ENCODE measurements at regions of chr7 and their contacts with region 1.

Region 1: GRCh38 chr7:7761340-7761980 is 43.1 kb upstream of the RPA3 start:
- DNase-seq: peak; percentile 64
- H3K4me3 Mint-ChIP-seq: peak overlapping the region; percentile 87
- H3K27ac Mint-ChIP-seq: peak overlapping the region; percentile 95
- H3K4me1 Mint-ChIP-seq: peaks cover 33% of the 10 kb centered on the region
- H3K27me3 Mint-ChIP-seq: no peaks in the 10 kb centered on the region
- CTCF ChIP-seq: peak; percentile 30

Region 2: GRCh38 chr7:7595451-7595850 is 166.0 kb before region 1 on chr7:
- CTCF ChIA-PET with region 1: interaction called, 7 read pairs
- POLR2A ChIA-PET with region 1: no interaction called
- intact Hi-C with region 1: loop called (anchors 1 kb)
- DNase-seq: peak; percentile 26
- H3K4me3 Mint-ChIP-seq: no peak overlapping the region
- H3K27ac Mint-ChIP-seq: no peak overlapping the region
- H3K4me1 Mint-ChIP-seq: peaks cover 5% of the 10 kb centered on the region
- H3K27me3 Mint-ChIP-seq: no peaks in the 10 kb centered on the region
- CTCF ChIP-seq: peak; percentile 28

Region 3: DNA sequence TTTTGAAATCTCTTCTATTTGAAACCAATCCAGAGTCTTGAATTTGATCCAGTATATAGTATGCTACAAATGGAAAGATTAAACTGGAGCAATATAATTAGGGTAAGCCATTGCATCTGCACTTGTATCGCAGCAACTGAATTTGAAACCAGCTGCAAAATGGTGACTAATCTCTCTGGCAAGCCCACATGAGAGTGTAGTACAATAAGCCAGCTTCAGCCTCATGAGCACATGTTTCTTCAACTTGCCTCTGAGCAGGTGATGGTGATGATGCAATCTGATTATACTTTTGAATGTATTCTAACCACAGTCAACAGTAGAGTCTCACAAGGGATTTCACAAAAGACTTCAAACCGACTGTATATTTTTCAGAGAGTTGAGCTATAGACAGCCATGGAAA is 42.2 kb before region 1 on chr7:
- CTCF ChIA-PET with region 1: no interaction called
- POLR2A ChIA-PET with region 1: interaction called, 19 read pairs
- intact Hi-C with region 1: no loop called
- DNase-seq: peak; percentile 96
- H3K4me3 Mint-ChIP-seq: peak overlapping the region; percentile 55
- H3K27ac Mint-ChIP-seq: peak overlapping the region; percentile 90
- H3K4me1 Mint-ChIP-seq: peaks cover 18% of the 10 kb centered on the region
- H3K27me3 Mint-ChIP-seq: no peaks in the 10 kb centered on the region
- CTCF ChIP-seq: no peak

Region 4: DNA sequence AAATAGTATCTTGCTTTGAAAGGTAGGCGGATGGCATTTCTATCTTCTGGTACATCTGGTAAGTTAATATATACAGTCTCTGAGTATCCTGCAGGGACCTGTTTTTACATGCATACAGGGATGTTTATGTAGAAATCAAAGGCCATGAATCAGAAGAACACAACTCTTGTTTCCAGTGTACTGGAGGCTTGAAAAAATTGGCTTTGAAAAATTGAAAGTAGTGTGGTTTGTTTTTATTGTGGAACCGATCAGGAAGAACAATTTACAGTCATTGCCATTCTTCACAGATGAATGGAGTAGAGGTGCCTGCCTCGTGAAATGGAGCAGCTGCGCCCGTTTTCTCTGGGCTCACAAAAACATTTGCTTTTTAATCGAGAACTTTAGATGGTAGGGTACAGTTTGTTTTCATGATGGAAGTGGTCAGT is 10.9 kb after region 1 on chr7:
- CTCF ChIA-PET with region 1: interaction called, 9 read pairs
- POLR2A ChIA-PET with region 1: interaction called, 18 read pairs
- intact Hi-C with region 1: no loop called
- DNase-seq: peak; percentile 58
- H3K4me3 Mint-ChIP-seq: peak overlapping the region; percentile 76
- H3K27ac Mint-ChIP-seq: peak overlapping the region; percentile 92
- H3K4me1 Mint-ChIP-seq: peaks cover 43% of the 10 kb centered on the region
- H3K27me3 Mint-ChIP-seq: no peaks in the 10 kb centered on the region
- CTCF ChIP-seq: no peak

Region 5: GRCh38 chr7:8035647-8036518 is 274.4 kb after region 1 on chr7:
- CTCF ChIA-PET with region 1: interaction called, 12 read pairs
- POLR2A ChIA-PET with region 1: no interaction called
- intact Hi-C with region 1: loop called (anchors 1 kb)
- DNase-seq: peak; percentile 52
- H3K4me3 Mint-ChIP-seq: no peak overlapping the region
- H3K27ac Mint-ChIP-seq: no peak overlapping the region
- H3K4me1 Mint-ChIP-seq: no peaks in the 10 kb centered on the region
- H3K27me3 Mint-ChIP-seq: no peaks in the 10 kb centered on the region
- CTCF ChIP-seq: peak; percentile 50

Measured in MCF 10A (cell line).